A549 (cell line): ENCODE measurements at regions of chr11 and their contacts with region 1.

Region 1: DNA sequence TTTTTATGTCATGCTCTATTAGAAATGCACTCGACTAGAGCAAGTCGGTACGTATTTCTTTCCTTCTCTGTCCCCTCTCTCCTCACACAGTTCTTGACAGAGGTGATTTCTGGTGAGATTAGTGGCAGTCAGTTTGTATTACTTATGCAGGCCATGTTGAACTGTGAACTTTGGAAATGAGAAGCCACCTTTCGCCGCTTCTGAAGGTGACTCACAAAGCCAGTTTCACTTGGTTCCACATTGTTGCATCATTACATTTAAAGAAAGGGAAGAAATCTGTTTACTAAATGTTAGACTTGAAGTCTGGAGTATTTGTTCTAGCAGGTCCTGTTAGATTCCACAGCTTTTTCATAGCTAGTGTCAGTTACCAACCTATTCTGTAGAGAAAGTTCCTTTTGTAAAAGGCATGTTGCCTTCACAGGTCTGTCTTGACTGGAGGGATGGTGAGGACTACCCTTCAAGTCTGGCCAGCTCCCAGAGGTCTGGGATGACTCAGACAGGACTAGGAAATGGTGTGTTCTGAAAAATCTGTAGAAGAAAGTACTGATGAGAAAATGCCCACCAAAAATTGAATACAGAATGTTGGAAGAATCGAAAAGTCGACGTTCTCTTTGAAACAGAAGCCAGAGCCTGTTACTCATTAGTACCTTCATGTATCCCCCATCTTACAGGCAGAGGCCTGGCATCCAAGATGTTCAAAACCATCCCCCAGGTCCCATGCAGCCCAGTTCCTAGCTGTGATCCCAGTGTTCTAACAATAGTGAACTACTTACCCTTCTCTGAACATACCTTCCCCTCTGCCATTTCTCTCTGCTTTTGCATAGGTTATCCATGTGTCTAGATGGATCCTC is 181.4 kb downstream of the DBX1 start:
- DNase-seq: peak; percentile 57 to 79
- ATAC-seq: peak; percentile 90 to 94
- H3K4me3 ChIP-seq: no peak overlapping the region; the same call in 2 of the 3 replicates
- H3K27ac ChIP-seq: peak overlapping the region; percentile 91 to 99
- H3K4me1 ChIP-seq: peaks cover 69% of the 10 kb centered on the region
- CTCF ChIP-seq: no peak
- EP300 ChIP-seq: peak; percentile 50 to 81; a peak in 3 of 5 replicates
- POLR2A ChIP-seq: no peak
- RAD21 ChIP-seq: peak in 1 of 2 experiments; percentile 25; a peak in 1 of 5 replicates

Region 2: DNA sequence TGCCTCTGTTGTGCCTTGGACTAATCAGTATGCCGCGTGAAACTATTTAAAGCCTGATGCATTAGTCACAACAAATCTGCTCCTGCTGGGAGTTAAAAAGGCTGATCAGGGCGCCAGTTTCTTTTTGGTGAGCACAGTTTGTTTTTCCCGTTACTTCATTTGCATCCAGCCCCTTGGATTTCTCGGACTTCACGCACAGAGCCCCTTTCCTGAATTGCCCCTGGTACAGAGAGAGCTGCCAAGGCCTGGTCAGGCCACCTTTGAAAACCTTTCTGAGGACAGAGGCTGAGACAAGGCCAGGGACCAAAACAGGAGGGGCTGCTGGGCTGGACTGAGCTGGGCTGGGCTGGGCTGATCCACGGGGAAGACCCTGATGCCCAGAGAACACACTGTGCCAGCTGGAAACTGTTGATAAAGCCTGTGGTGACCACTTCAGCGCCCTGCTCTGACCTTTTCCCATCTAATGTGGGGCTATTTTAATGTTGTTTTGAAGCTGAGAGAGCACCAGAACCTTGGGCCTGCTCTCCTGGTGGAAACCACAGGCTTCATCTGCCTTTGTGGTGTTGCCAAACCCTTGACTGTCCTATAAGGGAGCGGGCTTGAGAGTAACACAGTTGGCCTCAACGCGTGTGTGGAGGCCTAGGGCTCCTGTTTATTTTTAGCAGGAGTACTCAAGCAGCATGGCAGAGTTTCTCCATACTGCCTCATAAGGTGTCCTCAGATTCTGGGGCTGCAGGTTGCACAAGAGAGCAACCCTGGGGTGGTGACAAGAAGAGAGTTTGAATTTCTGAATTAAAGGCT is 222.0 kb before region 1 on chr11:
- CTCF ChIA-PET with region 1: no interaction called
- POLR2A ChIA-PET with region 1: no interaction called
- DNase-seq: no peak
- ATAC-seq: no peak
- H3K4me3 ChIP-seq: no peak overlapping the region
- H3K27ac ChIP-seq: no peak overlapping the region
- H3K4me1 ChIP-seq: no peaks in the 10 kb centered on the region
- CTCF ChIP-seq: no peak
- EP300 ChIP-seq: no peak
- POLR2A ChIP-seq: no peak
- RAD21 ChIP-seq: no peak

Region 3: DNA sequence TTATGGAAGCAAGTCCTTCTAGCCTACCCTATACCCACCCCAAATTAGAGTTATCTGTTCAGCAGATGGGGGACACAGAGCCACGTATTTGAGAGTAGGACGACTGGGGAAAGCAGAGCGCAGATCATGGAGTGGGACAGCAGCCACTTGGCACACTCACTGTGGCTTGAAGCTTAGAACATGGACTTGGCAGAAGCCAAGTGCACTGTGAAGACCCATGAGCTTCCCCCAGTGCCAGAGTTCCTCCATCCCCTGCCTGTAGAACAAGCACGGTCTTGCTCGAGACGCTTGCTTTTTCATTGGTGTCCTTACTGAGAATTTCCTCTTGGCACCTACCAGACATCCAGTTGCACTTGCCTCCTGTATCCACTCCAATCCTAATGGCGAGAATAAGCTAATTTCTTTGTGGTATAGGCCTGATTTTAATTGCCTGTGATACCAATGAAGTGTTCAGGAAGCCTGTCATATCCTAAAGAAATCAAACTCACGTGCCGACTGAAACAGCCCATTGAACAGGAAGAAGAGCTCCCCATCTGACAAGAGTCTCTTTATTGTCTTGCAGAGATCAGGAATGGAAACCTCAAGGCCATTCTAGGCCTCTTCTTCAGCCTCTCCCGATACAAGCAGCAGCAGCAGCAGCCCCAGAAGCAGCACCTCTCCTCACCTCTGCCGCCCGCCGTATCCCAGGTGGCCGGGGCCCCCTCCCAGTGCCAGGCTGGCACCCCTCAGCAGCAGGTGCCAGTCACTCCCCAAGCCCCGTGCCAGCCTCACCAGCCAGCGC is 99.4 kb before region 1 on chr11:
- CTCF ChIA-PET with region 1: no interaction called
- POLR2A ChIA-PET with region 1: no interaction called
- DNase-seq: no peak
- ATAC-seq: no peak
- H3K4me3 ChIP-seq: no peak overlapping the region
- H3K27ac ChIP-seq: no peak overlapping the region
- H3K4me1 ChIP-seq: no peaks in the 10 kb centered on the region
- CTCF ChIP-seq: no peak
- EP300 ChIP-seq: no peak
- POLR2A ChIP-seq: no peak
- RAD21 ChIP-seq: no peak

Region 4: GRCh38 chr11:19992162-19992561 is 13.3 kb after region 1 on chr11:
- CTCF ChIA-PET with region 1: interaction called, 10 read pairs
- POLR2A ChIA-PET with region 1: interaction called, 3 read pairs
- DNase-seq: no peak
- ATAC-seq: no peak
- H3K4me3 ChIP-seq: no peak overlapping the region
- H3K27ac ChIP-seq: peak overlapping the region; percentile 45 to 99; a peak in 2 of 6 replicates
- H3K4me1 ChIP-seq: peaks cover 49% of the 10 kb centered on the region
- CTCF ChIP-seq: no peak
- EP300 ChIP-seq: no peak
- POLR2A ChIP-seq: no peak
- RAD21 ChIP-seq: no peak

Region 5: GRCh38 chr11:20056109-20056949 is 77.4 kb after region 1 on chr11:
- CTCF ChIA-PET with region 1: no interaction called
- POLR2A ChIA-PET with region 1: no interaction called
- DNase-seq: no peak
- ATAC-seq: no peak
- H3K4me3 ChIP-seq: no peak overlapping the region
- H3K27ac ChIP-seq: 0 out of 6 replicates have a peak overlapping the region, but pooled peaks of 1 of the 2 experiments have one; percentile 25
- H3K4me1 ChIP-seq: 0 out of 3 replicates have a peak, but pooled peaks cover 4% of the 10 kb centered on the region
- CTCF ChIP-seq: no peak
- EP300 ChIP-seq: no peak
- POLR2A ChIP-seq: no peak
- RAD21 ChIP-seq: no peak